ENCODE measurements at regions of chr5 and their contacts with region 1.

Region 1: GRCh38 chr5:132829742-132830435 is 558 bp downstream of the SHROOM1 start:
- DNase-seq: peak; percentile 74
- H3K4me3 Mint-ChIP-seq: peak overlapping the region; percentile 79
- H3K27ac Mint-ChIP-seq: no peak overlapping the region
- H3K4me1 Mint-ChIP-seq: peaks cover 17% of the 10 kb centered on the region
- H3K27me3 Mint-ChIP-seq: peaks cover 49% of the 10 kb centered on the region

Region 2: DNA sequence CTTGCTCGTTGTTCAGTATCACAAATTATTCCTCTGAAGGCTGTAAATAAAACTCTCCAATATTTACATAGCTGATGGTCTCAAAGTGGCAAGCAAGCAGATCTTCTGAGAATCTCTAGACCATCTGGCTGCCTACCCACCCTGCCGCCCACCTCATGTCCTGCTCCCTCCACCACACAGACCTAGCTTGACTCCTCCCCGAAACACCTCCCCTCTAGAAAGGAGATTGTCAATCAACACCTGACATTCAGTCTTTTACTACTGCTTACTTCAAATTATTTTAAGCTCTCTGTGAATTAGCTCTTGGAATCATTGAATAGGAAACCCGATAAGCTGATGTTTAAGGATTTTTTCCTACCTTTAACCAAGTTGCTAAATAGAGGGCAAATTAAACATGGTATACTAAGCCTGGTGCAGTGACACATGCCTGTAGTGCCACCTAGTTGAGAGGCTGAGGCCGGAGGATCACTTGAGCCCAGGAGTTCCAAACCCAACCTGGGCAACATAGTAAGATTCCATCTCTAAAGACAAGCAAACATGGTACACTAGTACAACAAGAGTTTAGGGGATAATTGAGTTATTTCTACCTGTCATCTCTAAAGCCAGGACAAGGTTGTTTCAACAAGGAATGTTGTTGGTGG is 27.7 kb before region 1 on chr5:
- CTCF ChIA-PET with region 1: no interaction called
- POLR2A ChIA-PET with region 1: no interaction called
- DNase-seq: no peak
- H3K4me3 Mint-ChIP-seq: no peak overlapping the region
- H3K27ac Mint-ChIP-seq: no peak overlapping the region
- H3K4me1 Mint-ChIP-seq: peaks cover 2% of the 10 kb centered on the region
- H3K27me3 Mint-ChIP-seq: peaks cover 33% of the 10 kb centered on the region

Region 3: GRCh38 chr5:132813599-132814502 is 16.0 kb before region 1 on chr5:
- CTCF ChIA-PET with region 1: interaction called, 36 read pairs
- POLR2A ChIA-PET with region 1: interaction called, 5 read pairs
- DNase-seq: no peak
- H3K4me3 Mint-ChIP-seq: no peak overlapping the region
- H3K27ac Mint-ChIP-seq: no peak overlapping the region
- H3K4me1 Mint-ChIP-seq: peaks cover 12% of the 10 kb centered on the region
- H3K27me3 Mint-ChIP-seq: peaks cover 50% of the 10 kb centered on the region

Region 4: DNA sequence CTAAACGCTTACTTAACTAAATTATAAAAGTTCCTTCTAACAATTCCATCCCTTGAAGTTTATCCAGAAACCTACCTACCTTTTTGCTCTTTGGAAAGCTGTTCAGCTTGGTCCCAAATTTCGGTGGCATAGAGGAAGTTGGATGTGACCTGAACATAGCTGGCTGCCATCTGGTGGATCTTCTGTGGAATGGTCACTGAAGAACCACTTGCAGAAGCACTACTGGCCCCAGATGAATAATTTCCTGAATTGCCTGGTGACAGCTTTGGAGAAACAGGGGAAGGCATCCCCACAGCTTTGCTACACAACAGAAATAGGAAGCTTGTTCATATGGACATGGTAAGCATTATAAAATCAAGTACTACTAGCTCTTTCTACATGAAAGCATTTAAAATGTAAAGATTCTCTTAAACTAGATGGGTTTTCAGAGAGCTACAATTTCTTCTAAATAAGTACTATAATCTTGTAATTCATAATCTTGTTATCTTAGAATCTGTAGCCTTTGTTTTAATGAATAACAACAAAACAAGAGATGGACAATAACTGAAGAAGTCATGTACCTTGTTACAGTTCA is 53.5 kb after region 1 on chr5:
- CTCF ChIA-PET with region 1: interaction called, 29 read pairs
- POLR2A ChIA-PET with region 1: interaction called, 3 read pairs
- DNase-seq: peak; percentile 29
- H3K4me3 Mint-ChIP-seq: no peak overlapping the region
- H3K27ac Mint-ChIP-seq: peak overlapping the region; percentile 37
- H3K4me1 Mint-ChIP-seq: peaks cover 10% of the 10 kb centered on the region
- H3K27me3 Mint-ChIP-seq: no peaks in the 10 kb centered on the region

Measured in activated CD4-positive, alpha-beta memory T cell treated with anti-CD3 and anti-CD28 coated beads, Interleukin-2, amount 10 ng/mL, durations not matched to agents 7 days and 5 days (primary cell).